PC-3 (cell line): ENCODE measurements at regions of chr10 and their contacts with region 1.

Region 1: GRCh38 chr10:73940634-73941221 is 29.8 kb downstream of the PLAU start:
- DNase-seq: peak; percentile 100
- ATAC-seq: peak; percentile 85
- H3K4me3 ChIP-seq: peak overlapping the region; percentile 38
- H3K27ac ChIP-seq: peak overlapping the region; percentile 74
- H3K4me1 ChIP-seq: peaks cover 31% of the 10 kb centered on the region
- H3K27me3 ChIP-seq: no peaks in the 10 kb centered on the region
- CTCF ChIP-seq: peak; percentile 100

Region 2: DNA sequence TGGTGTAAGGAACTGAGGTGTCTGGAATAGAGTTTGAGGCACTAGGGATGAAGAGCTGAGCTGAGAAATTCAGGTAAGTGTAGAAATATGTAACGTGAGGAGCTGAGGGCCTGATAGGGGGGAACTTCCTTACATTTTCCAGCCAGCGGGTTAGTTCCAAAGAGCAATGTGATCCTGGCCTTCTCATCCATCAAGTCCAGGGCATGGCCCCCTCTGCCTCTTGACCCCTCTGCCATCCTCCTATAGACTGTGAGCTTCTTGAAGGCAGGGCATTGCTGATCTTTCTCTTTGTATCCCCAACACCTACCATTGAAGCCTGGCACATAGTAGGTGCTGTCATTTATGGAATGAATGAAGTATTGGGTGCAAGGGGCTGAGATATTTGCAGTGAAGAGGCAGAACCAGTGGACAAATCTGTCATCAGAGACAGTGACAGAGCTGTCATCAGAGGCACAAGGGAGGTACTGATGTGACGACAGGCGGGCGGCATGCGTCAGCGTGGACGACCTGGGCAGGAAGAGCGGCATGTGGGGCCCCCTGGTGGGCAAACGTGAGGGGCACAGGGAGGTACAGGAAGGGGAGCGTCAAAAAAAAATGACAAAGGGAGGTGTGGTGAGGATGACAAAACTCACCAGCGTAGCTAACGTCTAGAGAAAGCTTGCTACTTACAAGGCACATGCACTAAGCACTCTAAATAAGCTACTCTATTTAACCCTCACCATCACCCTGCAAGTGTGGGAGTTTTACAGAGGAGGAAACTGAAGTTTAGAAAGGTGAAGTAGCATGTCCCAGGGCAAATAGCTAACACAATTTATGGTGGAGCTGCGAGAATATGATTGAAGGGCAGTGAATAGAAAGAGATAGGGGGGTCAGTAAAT is 61.2 kb before region 1 on chr10:
- CTCF ChIA-PET with region 1: interaction called, 26 read pairs
- POLR2A ChIA-PET with region 1: interaction called, 26 read pairs
- intact Hi-C with region 1: no loop called
- DNase-seq: peak; percentile 100
- ATAC-seq: peak; percentile 76
- H3K4me3 ChIP-seq: peak overlapping the region; percentile 8; the same call in 1 of the 2 replicates
- H3K27ac ChIP-seq: no peak overlapping the region
- H3K4me1 ChIP-seq: peaks cover 51% of the 10 kb centered on the region
- H3K27me3 ChIP-seq: no peaks in the 10 kb centered on the region
- CTCF ChIP-seq: peak; percentile 100

Region 3: DNA sequence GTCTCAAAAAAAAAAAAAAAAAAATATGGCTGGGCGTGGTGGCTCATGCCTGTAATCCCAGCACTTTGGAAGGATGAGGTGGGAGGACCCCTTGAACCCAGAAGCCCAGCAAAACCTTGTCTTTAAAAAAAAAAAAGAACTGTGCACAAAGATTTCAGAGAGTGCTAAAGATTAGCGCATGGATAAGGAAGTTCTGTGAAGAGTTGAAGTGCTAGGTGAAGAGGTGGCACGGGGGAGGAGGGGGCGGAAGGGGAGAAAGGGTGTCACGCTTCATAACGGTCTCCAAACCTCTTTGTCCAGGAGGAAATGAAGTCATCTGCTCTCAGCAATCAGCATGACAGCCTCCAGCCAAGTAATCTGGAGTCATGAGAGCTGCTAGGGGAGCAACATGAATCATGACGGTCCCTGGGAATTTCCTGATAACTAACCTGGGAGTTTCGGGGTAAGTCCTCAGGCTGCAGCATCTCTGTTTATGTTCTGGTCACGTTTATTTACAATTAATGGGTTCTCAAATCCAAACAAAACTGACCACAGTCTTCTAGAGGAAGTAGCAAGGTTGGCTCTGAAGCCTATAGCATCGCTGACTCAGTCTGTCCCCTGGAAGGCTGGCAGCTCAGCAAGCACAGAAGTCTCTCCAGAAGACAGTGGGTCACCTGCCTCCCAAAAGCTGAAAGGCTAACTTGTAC is 31.7 kb before region 1 on chr10:
- CTCF ChIA-PET with region 1: interaction called, 21 read pairs
- POLR2A ChIA-PET with region 1: interaction called, 5 read pairs
- intact Hi-C with region 1: loop called (anchors 1 kb)
- DNase-seq: peak; percentile 100
- ATAC-seq: peak; percentile 37
- H3K4me3 ChIP-seq: peak overlapping the region; percentile 68
- H3K27ac ChIP-seq: peak overlapping the region; percentile 78
- H3K4me1 ChIP-seq: peaks cover 88% of the 10 kb centered on the region
- H3K27me3 ChIP-seq: no peaks in the 10 kb centered on the region
- CTCF ChIP-seq: no peak

Region 4: DNA sequence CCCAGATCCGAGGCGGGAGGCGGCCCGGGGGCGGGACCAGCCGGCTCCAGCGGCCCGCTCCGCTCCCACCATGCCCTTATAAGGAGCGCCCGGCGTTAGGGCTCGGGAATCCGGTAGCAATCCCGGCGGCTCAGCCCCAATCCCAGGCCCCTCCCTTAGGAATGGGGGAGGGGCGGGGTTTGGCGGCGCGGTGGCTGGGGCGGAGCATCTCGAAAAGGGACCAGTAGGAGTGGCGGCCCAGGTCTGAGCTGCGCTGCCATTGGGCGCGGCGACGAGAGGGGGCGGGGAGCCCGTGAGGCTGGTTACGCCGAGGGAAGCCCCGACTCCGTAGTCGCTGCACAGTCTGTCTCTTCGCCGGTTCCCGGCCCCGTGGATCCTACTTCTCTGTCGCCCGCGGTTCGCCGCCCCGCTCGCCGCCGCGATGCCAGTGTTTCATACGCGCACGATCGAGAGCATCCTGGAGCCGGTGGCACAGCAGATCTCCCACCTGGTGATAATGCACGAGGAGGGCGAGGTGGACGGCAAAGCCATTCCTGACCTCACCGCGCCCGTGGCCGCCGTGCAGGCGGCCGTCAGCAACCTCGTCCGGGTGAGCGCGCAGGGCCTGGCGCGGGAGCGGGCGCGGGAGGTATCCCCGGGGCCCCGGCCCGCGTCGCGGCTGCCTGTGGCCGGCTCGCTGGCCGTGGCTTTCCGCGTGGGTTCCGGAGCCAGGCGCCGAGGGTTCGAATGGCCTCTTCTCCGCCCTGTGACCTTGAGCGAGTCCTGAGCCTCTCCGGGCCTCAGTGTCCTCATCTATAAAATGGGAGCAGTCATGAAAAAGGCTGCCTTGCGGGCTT is 57.3 kb after region 1 on chr10 and contains the start of gene VCL:
- CTCF ChIA-PET with region 1: interaction called, 15 read pairs
- POLR2A ChIA-PET with region 1: interaction called, 9 read pairs
- intact Hi-C with region 1: loop called (anchors 1 kb)
- DNase-seq: peak; percentile 100
- ATAC-seq: peak; percentile 83
- H3K4me3 ChIP-seq: peak within 1 kb of the TSS; percentile 73
- H3K27ac ChIP-seq: peak within 1 kb of the TSS; percentile 66
- H3K4me1 ChIP-seq: peaks cover 32% of the 10 kb centered on the region
- H3K27me3 ChIP-seq: no peaks in the 10 kb centered on the region
- CTCF ChIP-seq: no peak
- total RNA-seq, gene VCL: 382 and 445 TPM in 2 replicates

Region 5: DNA sequence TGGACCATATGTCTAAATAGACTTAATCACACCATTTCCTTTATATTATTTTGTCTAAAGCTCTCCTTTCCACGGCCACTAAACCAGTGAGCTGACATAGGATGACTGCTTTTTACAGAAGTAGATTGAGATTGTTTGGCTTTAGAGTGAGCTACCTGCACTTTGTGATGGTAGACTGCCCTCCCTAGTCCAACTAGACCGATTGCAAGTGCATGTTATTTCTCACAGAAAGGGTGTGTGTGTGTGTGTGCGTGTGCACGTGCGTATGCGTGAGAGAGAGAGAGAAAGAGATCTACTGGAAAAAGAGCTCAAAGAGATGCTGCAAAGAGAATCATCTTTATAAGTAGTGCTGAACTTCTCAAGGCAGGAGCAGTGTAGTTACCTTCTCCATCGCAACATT is 117.9 kb after region 1 on chr10:
- CTCF ChIA-PET with region 1: interaction called, 6 read pairs
- POLR2A ChIA-PET with region 1: interaction called, 3 read pairs
- intact Hi-C with region 1: loop called (anchors 1 kb)
- DNase-seq: peak; percentile 77
- ATAC-seq: no peak
- H3K4me3 ChIP-seq: no peak overlapping the region; the same call in 1 of the 2 replicates
- H3K27ac ChIP-seq: peak overlapping the region; percentile 71
- H3K4me1 ChIP-seq: peaks cover 55% of the 10 kb centered on the region
- H3K27me3 ChIP-seq: no peaks in the 10 kb centered on the region
- CTCF ChIP-seq: peak; percentile 75

Region 6: GRCh38 chr10:74118804-74119203 is 178.1 kb after region 1 on chr10:
- CTCF ChIA-PET with region 1: interaction called, 16 read pairs
- POLR2A ChIA-PET with region 1: no interaction called
- intact Hi-C with region 1: no loop called
- DNase-seq: peak; percentile 93
- ATAC-seq: peak; percentile 98
- H3K4me3 ChIP-seq: no peak overlapping the region
- H3K27ac ChIP-seq: peak overlapping the region; percentile 59
- H3K4me1 ChIP-seq: peaks cover 20% of the 10 kb centered on the region
- H3K27me3 ChIP-seq: no peaks in the 10 kb centered on the region
- CTCF ChIP-seq: 0 out of 2 replicates have a peak, but pooled peaks have one; percentile 16